HepG2 (cell line): ENCODE measurements at regions of chr6 and their contacts with region 1.

Region 1: DNA sequence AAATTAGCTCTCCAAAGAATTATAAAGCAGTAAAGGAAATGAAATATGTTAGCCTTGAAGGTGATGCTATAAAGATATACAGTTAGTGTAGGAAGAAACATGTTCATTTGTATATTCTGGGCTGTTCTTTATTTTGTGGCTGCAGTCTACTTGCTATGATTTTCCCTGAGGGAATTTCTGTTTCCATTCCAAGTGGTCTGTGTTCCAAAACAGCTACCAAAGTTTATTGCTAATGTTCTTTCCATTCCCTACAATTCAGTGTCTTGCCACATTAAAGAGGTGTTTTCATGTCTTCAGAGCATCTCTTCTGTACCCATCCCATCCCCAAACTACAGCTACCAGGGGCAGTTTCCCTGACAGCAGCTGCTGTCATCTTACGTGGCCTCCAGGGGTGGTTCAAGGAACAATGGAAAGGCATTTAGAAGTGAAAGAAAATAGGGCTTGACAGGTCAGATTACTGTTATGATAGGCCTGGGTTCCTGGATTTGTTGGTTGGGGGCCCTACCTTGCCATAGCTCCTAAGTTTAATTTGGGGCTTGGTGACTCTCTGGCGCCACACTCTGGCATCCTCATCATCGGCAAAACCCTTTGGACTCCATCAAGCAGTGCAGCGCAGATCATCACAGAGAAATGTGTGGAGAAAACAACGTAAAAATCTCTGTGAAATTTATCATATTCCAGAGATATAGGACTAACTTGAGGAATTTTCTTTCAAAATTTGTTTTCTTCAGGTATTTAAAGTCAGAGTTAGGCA is 33.8 kb upstream of the AIG1 start:
- DNase-seq: peak; percentile 38
- ATAC-seq: peak; percentile 87
- H3K4me3 ChIP-seq: no peak overlapping the region
- H3K27ac ChIP-seq: no peak overlapping the region
- H3K4me1 ChIP-seq: peaks cover 6% of the 10 kb centered on the region; the same call in 1 of the 2 replicates
- H3K27me3 ChIP-seq: no peaks in the 10 kb centered on the region
- CTCF ChIP-seq: peak; percentile 83
- EP300 ChIP-seq: no peak
- POLR2A ChIP-seq: no peak
- RAD21 ChIP-seq: peak; percentile 85

Region 2: GRCh38 chr6:142474531-142475289 is 552.2 kb before region 1 on chr6:
- CTCF ChIA-PET with region 1: no interaction called
- POLR2A ChIA-PET with region 1: no interaction called
- in situ Hi-C with region 1: no loop called
- intact Hi-C with region 1: loop called (anchors 10 kb)
- DNase-seq: peak; percentile 63
- ATAC-seq: peak; percentile 93
- H3K4me3 ChIP-seq: peak overlapping the region in 2 of 3 experiments; percentile 8 to 26; a peak in 1 of 6 replicates
- H3K27ac ChIP-seq: no peak overlapping the region
- H3K4me1 ChIP-seq: no peaks in the 10 kb centered on the region
- H3K27me3 ChIP-seq: no peaks in the 10 kb centered on the region; a peak in 1 of 5 replicates
- CTCF ChIP-seq: peak; percentile 80
- EP300 ChIP-seq: no peak
- POLR2A ChIP-seq: no peak
- RAD21 ChIP-seq: peak; percentile 76

Region 3: GRCh38 chr6:142566628-142567396 is 460.1 kb before region 1 on chr6:
- CTCF ChIA-PET with region 1: no interaction called
- POLR2A ChIA-PET with region 1: no interaction called
- in situ Hi-C with region 1: no loop called
- intact Hi-C with region 1: loop called (anchors 1 kb)
- DNase-seq: peak; percentile 64
- ATAC-seq: peak; percentile 92
- H3K4me3 ChIP-seq: no peak overlapping the region
- H3K27ac ChIP-seq: no peak overlapping the region
- H3K4me1 ChIP-seq: no peaks in the 10 kb centered on the region
- H3K27me3 ChIP-seq: no peaks in the 10 kb centered on the region; a peak in 2 of 5 replicates
- CTCF ChIP-seq: peak; percentile 87
- EP300 ChIP-seq: no peak
- POLR2A ChIP-seq: no peak
- RAD21 ChIP-seq: peak; percentile 70

Region 4: DNA sequence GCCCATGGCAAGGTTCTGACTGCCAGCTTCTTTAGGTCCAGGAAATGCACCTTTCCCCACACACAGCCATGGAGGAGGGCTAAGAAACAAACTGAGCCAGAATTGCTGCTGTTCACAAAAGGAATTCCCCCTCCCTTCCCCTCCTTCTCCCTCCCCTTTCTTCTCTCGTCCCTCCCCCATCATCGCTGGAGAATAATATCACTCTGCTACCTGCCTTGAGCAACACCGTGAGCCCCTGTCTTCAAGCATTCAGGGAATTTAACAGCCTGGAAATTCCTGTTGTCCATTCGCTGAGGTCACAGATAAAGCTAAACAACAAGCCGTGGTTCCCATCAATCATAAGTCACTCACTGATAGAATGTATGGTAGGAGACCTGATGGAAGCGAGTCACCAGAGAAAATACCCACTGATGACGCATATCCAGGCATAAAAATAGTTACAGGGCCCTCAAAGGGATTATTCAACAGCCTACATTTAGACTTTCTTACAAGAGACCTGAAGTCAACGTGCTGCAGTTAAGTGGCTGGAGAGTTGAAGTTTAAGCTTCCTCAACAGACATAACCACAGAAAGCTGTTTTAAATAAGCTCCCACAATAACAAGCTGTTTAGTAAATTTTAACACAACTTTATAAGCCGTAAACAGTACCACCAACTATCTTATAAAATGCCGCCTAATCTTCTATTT is 141.5 kb before region 1 on chr6:
- CTCF ChIA-PET with region 1: no interaction called
- POLR2A ChIA-PET with region 1: no interaction called
- in situ Hi-C with region 1: no loop called
- intact Hi-C with region 1: loop called (anchors 5 kb)
- DNase-seq: peak; percentile 84
- ATAC-seq: peak; percentile 60
- H3K4me3 ChIP-seq: no peak overlapping the region
- H3K27ac ChIP-seq: no peak overlapping the region
- H3K4me1 ChIP-seq: peaks cover 27% of the 10 kb centered on the region
- H3K27me3 ChIP-seq: no peaks in the 10 kb centered on the region
- CTCF ChIP-seq: no peak
- EP300 ChIP-seq: no peak
- POLR2A ChIP-seq: no peak
- RAD21 ChIP-seq: no peak

Region 5: DNA sequence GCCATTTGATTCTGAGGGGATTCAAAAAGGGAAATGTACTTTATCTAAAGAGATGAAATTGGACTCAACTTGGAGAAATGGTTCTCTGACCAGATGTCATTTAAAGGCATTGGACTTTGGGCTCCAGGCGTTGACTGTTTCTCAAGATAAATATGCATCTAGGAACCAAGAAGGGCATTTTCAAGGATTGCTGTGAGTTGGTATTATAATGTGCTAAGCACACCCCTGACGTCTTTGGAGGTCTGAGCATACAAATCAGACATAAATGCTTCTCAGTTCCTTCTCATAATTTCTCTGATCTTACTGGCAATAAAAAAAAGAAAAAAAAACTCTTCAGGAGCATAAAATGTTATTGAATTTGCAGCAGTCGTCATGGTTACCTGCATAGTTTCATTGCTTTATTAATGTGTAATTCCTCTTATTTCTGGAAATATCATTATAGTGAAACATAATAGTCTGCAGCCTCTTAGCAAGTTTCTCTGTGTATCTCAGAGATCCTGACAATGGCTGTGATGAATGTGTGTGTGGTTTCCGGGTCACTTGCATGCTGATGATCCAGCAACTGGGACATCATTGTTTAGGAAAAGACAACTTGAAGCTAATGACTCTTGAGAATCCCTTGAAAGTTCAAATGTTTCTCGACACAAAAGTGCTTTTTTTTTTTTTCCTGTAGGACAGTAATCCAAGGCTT is 169.8 kb after region 1 on chr6:
- CTCF ChIA-PET with region 1: no interaction called
- POLR2A ChIA-PET with region 1: no interaction called
- in situ Hi-C with region 1: no loop called
- intact Hi-C with region 1: no loop called
- DNase-seq: no peak
- ATAC-seq: no peak
- H3K4me3 ChIP-seq: no peak overlapping the region
- H3K27ac ChIP-seq: no peak overlapping the region
- H3K4me1 ChIP-seq: peaks cover 7% of the 10 kb centered on the region; the same call in 1 of the 2 replicates
- H3K27me3 ChIP-seq: no peaks in the 10 kb centered on the region
- CTCF ChIP-seq: no peak
- EP300 ChIP-seq: no peak
- POLR2A ChIP-seq: no peak
- RAD21 ChIP-seq: no peak